CD8-positive, alpha-beta memory T cell (primary cell): ENCODE measurements at regions of chr11 and their contacts with region 1.

Region 1: DNA sequence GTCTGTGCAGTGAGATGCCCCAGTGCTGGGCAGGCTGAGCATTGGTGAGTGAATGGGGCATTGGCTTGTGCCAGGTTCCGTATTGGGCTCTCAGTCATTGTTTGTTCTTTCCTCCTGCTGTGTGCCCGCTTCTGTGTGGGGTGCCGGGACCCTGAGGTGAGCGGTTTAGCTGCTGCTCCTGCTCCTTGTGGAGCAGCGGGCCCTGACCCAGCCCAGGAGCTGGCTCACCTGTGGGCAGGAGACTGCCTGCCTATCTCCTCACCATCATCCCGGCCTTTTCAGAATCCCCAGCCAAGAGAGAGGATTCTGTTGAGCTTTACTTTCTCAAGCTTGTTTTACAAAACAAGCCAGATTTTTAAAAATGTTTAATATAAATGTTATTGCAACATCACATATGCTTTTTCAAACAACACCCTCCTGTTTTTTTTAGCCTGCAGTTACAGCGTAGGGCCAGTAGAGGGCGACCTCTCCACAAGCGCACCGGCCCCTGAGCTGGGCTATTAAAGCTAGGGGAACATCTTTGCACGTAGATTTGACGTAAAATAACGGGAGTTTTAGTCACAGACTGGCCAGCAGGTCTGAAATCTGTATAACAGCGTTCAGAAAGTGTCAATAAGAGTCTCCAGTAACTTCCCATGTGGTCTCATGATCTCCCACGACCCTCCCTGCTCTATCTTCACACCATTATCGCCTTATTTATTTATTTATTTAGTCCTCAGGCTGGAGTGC is 25.1 kb upstream of the RELT start:
- DNase-seq: peak; percentile 25 to 74 (median 68)
- H3K4me3 ChIP-seq: no peak overlapping the region
- H3K4me3 Mint-ChIP-seq: no peak overlapping the region
- H3K27ac ChIP-seq: no peak overlapping the region
- H3K27ac Mint-ChIP-seq: peak overlapping the region in 5 of 8 donors; percentile 43 to 83 (median 50)
- H3K4me1 ChIP-seq: no peaks in the 10 kb centered on the region
- H3K4me1 Mint-ChIP-seq: peaks cover 4 to 6% (median 4%) of the 10 kb centered on the region in 3 donors
- H3K27me3 ChIP-seq: no peaks in the 10 kb centered on the region
- H3K27me3 Mint-ChIP-seq: peaks cover 3 to 10% of the 10 kb centered on the region in 2 donors

Region 2: GRCh38 chr11:73307323-73308002 is 43.6 kb before region 1 on chr11:
- CTCF ChIA-PET with region 1: interaction called, 16 read pairs
- POLR2A ChIA-PET with region 1: no interaction called
- DNase-seq: peak; percentile 79 to 91 (median 82)
- H3K4me3 ChIP-seq: peak overlapping the region; percentile 67
- H3K4me3 Mint-ChIP-seq: peak overlapping the region; percentile 86 to 96 (median 89)
- H3K27ac ChIP-seq: peak overlapping the region; percentile 25
- H3K27ac Mint-ChIP-seq: peak overlapping the region in 6 of 8 donors; percentile 4 to 95 (median 30)
- H3K4me1 ChIP-seq: peaks cover 7% of the 10 kb centered on the region
- H3K4me1 Mint-ChIP-seq: peaks cover 9 to 10% (median 10%) of the 10 kb centered on the region in 3 donors
- H3K27me3 ChIP-seq: peaks cover 5% of the 10 kb centered on the region
- H3K27me3 Mint-ChIP-seq: peaks cover 16 to 33% of the 10 kb centered on the region in 2 donors

Region 3: DNA sequence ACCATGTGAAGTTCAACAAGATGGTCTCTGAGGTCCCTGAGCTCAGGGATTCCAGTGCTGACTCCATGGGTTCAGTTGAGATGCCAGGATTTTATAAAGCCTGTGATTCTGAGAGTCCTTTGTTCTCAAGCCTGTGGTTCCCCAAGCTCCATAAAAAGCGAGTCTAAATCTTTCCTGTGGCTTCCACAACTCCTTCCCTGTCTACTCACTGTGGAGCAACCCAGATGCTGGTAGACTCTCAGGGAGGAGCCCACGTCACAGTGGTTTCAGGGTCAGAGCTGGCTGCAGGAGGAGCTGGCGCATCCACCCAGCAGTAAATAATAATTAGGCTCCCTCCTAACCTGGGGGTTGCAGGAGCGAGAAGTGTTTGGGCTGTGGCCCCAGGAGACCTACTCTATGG is 23.1 kb after region 1 on chr11:
- CTCF ChIA-PET with region 1: interaction called, 119 read pairs
- POLR2A ChIA-PET with region 1: no interaction called
- DNase-seq: no peak
- H3K4me3 ChIP-seq: no peak overlapping the region
- H3K4me3 Mint-ChIP-seq: peak overlapping the region in 1 of 7 donors; percentile 64
- H3K27ac ChIP-seq: no peak overlapping the region
- H3K27ac Mint-ChIP-seq: peak overlapping the region in 2 of 8 donors; percentile 68 to 96
- H3K4me1 ChIP-seq: peaks cover 26% of the 10 kb centered on the region
- H3K4me1 Mint-ChIP-seq: peaks cover 23 to 33% (median 26%) of the 10 kb centered on the region in 3 donors
- H3K27me3 ChIP-seq: no peaks in the 10 kb centered on the region
- H3K27me3 Mint-ChIP-seq: peaks cover 0 to 6% of the 10 kb centered on the region in 2 donors

Region 4: GRCh38 chr11:73384872-73385689 is 34.0 kb after region 1 on chr11:
- CTCF ChIA-PET with region 1: interaction called, 31 read pairs
- POLR2A ChIA-PET with region 1: no interaction called
- DNase-seq: no peak
- H3K4me3 ChIP-seq: no peak overlapping the region
- H3K4me3 Mint-ChIP-seq: peak overlapping the region; percentile 35 to 80 (median 54)
- H3K27ac ChIP-seq: peak overlapping the region; percentile 58
- H3K27ac Mint-ChIP-seq: peak overlapping the region; percentile 63 to 96 (median 86)
- H3K4me1 ChIP-seq: peaks cover 41% of the 10 kb centered on the region
- H3K4me1 Mint-ChIP-seq: peaks cover 47 to 85% (median 57%) of the 10 kb centered on the region in 3 donors
- H3K27me3 ChIP-seq: no peaks in the 10 kb centered on the region
- H3K27me3 Mint-ChIP-seq: peaks cover 0 to 3% of the 10 kb centered on the region in 2 donors

Region 5: GRCh38 chr11:73402834-73403185 is 51.7 kb after region 1 on chr11:
- CTCF ChIA-PET with region 1: interaction called, 190 read pairs
- POLR2A ChIA-PET with region 1: interaction called, 3 read pairs
- DNase-seq: peak in 1 of 5 donors; percentile 41
- H3K4me3 ChIP-seq: no peak overlapping the region
- H3K4me3 Mint-ChIP-seq: no peak overlapping the region
- H3K27ac ChIP-seq: no peak overlapping the region
- H3K27ac Mint-ChIP-seq: peak overlapping the region in 5 of 8 donors; percentile 46 to 80 (median 68)
- H3K4me1 ChIP-seq: no peaks in the 10 kb centered on the region
- H3K4me1 Mint-ChIP-seq: no peaks in the 10 kb centered on the region
- H3K27me3 ChIP-seq: no peaks in the 10 kb centered on the region
- H3K27me3 Mint-ChIP-seq: no peaks in the 10 kb centered on the region

Region 6: GRCh38 chr11:73661035-73661628 is 310.1 kb after region 1 on chr11:
- CTCF ChIA-PET with region 1: interaction called, 39 read pairs
- POLR2A ChIA-PET with region 1: no interaction called
- DNase-seq: peak; percentile 71 to 85 (median 78)
- H3K4me3 ChIP-seq: no peak overlapping the region
- H3K4me3 Mint-ChIP-seq: peak overlapping the region in 3 of 7 donors; percentile 42 to 61 (median 48)
- H3K27ac ChIP-seq: no peak overlapping the region
- H3K27ac Mint-ChIP-seq: no peak overlapping the region
- H3K4me1 ChIP-seq: peaks cover 7% of the 10 kb centered on the region
- H3K4me1 Mint-ChIP-seq: peaks cover 7 to 13% (median 8%) of the 10 kb centered on the region in 3 donors
- H3K27me3 ChIP-seq: no peaks in the 10 kb centered on the region
- H3K27me3 Mint-ChIP-seq: peaks cover 0 to 3% of the 10 kb centered on the region in 2 donors